CD8-positive, alpha-beta T cell (primary cell): ENCODE measurements at regions of chr3 and their contacts with region 1.

Region 1: GRCh38 chr3:108053067-108053466 is 37.8 kb downstream of the CD47 start:
- DNase-seq: no peak
- ATAC-seq: no peak
- H3K4me3 ChIP-seq: no peak overlapping the region
- H3K4me3 Mint-ChIP-seq: no peak overlapping the region
- H3K27ac ChIP-seq: peak overlapping the region in 1 of 2 experiments; percentile 15
- H3K27ac Mint-ChIP-seq: peak overlapping the region; percentile 87
- H3K4me1 ChIP-seq: peaks cover 10% of the 10 kb centered on the region
- H3K4me1 Mint-ChIP-seq: peaks cover 54% of the 10 kb centered on the region
- H3K27me3 ChIP-seq: no peaks in the 10 kb centered on the region
- H3K27me3 Mint-ChIP-seq: no peaks in the 10 kb centered on the region
- CTCF ChIP-seq: no peak

Region 2: DNA sequence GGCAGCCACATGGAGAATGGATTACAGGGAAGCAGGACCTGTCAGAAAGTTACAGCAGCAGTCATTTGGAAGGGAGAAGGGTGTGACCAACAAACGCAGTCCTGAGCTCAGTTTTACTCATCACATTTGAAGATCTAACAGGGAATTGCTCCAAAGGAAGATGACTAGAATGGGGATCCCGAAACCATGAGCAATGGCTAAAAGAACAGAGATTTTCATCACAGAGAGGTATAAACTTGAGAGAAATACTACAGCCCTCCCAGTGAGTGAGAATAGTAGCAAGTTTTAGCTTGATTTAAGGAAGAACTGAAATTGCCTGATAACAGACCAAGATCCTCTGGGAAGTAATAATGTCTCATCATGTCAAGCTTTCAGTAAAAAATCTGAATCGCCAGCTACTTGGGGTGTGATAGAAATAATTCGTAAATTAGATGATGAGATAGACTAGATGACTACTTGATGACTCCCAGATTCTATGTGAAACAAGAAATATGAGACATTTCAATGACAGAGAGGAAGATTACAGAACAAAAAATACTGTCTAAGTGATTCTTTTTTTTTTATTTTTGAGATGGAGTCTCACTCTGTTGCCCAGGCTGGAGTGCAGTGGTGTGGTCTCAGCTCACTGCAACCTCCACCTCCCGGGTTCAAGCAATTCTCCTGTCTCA is 20.8 kb after region 1 on chr3:
- CTCF ChIA-PET with region 1: interaction called, 3 read pairs
- POLR2A ChIA-PET with region 1: no interaction called
- intact Hi-C with region 1: loop called in 1 of 2 experiments (anchors 2 kb)
- DNase-seq: no peak
- ATAC-seq: no peak
- H3K4me3 ChIP-seq: no peak overlapping the region
- H3K4me3 Mint-ChIP-seq: no peak overlapping the region
- H3K27ac ChIP-seq: no peak overlapping the region
- H3K27ac Mint-ChIP-seq: peak overlapping the region; percentile 42
- H3K4me1 ChIP-seq: peaks cover 58% of the 10 kb centered on the region
- H3K4me1 Mint-ChIP-seq: peaks cover 74% of the 10 kb centered on the region
- H3K27me3 ChIP-seq: no peaks in the 10 kb centered on the region
- H3K27me3 Mint-ChIP-seq: no peaks in the 10 kb centered on the region
- CTCF ChIP-seq: no peak